ENCODE measurements at regions of chr7 and their contacts with region 1.

Region 1: DNA sequence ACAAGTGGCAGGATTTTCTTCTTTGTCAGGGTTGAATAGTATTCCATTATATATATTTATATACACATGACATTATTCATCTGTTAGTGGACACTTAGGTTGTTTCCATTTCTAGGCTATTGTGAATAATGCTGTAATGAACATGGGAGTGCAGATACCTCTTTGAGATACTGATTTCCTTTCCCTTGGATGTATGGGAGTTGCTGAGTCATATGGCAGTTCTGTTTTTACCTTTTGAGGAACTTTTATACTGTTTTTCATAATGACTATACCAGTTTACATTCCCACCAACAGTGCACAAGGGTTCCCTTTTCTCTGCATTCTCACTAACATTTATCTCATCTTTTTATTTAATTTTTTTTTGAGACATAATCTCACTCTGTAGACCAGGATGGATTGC is 1.8 kb upstream of the CLCN1 start:
- H3K4me3 Mint-ChIP-seq: no peak overlapping the region
- H3K27ac Mint-ChIP-seq: peak overlapping the region; percentile 70
- H3K4me1 Mint-ChIP-seq: peaks cover 89% of the 10 kb centered on the region
- H3K27me3 Mint-ChIP-seq: no peaks in the 10 kb centered on the region

Region 2: DNA sequence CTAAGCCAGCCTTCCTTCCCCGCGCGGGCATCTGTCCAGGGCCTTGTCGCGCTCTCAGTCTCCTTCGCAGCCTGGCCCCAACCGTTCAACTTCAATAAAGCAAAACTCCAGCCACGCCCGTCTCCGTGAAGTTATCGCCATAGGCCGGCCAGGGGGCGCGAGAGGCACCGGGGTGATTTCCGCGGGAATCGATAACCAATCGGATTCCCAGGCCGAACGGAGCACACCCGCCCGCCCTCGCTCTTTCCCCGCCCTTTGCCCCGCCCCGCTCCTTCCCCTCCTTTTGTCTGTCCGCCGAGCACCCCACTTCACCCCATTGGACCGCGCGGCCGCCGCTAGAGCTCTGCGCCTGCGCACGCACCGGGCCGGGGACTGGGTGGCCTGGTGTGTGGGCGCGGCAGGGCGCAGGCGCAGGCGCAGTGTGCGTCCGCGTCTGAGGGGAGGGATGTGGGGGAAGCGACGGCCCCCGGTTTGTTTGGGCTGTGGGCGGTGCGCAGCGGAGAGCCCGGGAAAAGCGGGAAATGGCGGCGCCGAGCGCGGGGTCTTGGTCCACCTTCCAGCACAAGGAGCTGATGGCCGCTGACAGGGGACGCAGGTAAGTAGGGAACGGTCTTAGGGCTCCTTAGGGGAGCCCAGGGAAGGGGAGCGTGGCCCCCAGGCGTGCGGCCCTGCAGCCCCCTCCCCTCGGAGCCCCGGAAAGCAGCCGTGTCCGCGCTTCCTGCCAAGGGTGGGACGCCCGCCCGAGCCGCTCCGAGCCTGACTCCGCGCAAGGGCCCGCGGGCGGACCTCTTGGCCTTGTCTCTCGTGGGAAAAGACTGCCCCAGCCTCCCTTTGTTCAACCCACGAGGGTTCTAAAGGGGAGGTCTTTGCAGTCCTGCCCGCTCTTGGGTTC is 25.9 kb before region 1 on chr7 and contains the start of gene CASP2:
- intact Hi-C with region 1: no loop called
- H3K4me3 Mint-ChIP-seq: peak within 1 kb of the TSS; percentile 97
- H3K27ac Mint-ChIP-seq: peak within 1 kb of the TSS; percentile 91
- H3K4me1 Mint-ChIP-seq: peaks cover 46% of the 10 kb centered on the region
- H3K27me3 Mint-ChIP-seq: no peaks in the 10 kb centered on the region

Region 3: GRCh38 chr7:143372070-143372469 is 57.9 kb after region 1 on chr7:
- intact Hi-C with region 1: loop called (anchors 5 kb)
- H3K4me3 Mint-ChIP-seq: no peak overlapping the region
- H3K27ac Mint-ChIP-seq: peak overlapping the region; percentile 53
- H3K4me1 Mint-ChIP-seq: peaks cover 56% of the 10 kb centered on the region
- H3K27me3 Mint-ChIP-seq: no peaks in the 10 kb centered on the region